GM12878 (cell line): ENCODE measurements at regions of chr9 and their contacts with region 1.

Region 1: GRCh38 chr9:32142074-32142473 is 242.4 kb upstream of the ACO1 start:
- DNase-seq: no peak
- ATAC-seq: no peak
- H3K4me3 ChIP-seq: no peak overlapping the region
- H3K27ac ChIP-seq: no peak overlapping the region
- H3K4me1 ChIP-seq: no peaks in the 10 kb centered on the region
- H3K27me3 ChIP-seq: no peaks in the 10 kb centered on the region
- CTCF ChIP-seq: no peak
- EP300 ChIP-seq: no peak
- POLR2A ChIP-seq: no peak
- RAD21 ChIP-seq: no peak

Region 2: GRCh38 chr9:32011049-32011448 is 131.0 kb before region 1 on chr9:
- CTCF ChIA-PET with region 1: no interaction called
- POLR2A ChIA-PET with region 1: no interaction called
- RAD21 ChIA-PET with region 1: no interaction called
- SMC1A ChIA-PET with region 1: no interaction called
- in situ Hi-C with region 1: no loop called
- intact Hi-C with region 1: no loop called
- DNase-seq: no peak
- ATAC-seq: peak; percentile 44
- H3K4me3 ChIP-seq: no peak overlapping the region
- H3K27ac ChIP-seq: no peak overlapping the region
- H3K4me1 ChIP-seq: no peaks in the 10 kb centered on the region
- H3K27me3 ChIP-seq: no peaks in the 10 kb centered on the region
- CTCF ChIP-seq: no peak
- EP300 ChIP-seq: no peak
- POLR2A ChIP-seq: no peak
- RAD21 ChIP-seq: no peak

Region 3: DNA sequence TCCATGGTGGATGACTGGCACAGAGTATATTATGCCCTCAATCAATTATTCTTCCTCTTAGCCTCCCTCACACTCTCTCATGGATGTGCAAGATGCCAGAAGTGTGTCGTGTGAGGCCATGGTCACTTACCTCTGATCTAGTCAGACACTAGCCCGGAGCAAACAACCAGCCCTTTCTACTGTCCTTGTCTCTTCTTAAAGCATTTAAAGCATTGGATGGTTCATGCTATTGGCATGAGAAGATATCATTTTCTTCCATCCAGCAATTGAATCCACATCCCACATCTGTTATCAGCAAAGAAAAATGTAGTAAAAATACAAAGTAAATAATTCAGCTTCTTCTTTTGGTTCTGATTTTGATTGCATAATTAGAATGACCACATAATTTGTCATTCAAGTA is 24.8 kb before region 1 on chr9:
- CTCF ChIA-PET with region 1: no interaction called
- POLR2A ChIA-PET with region 1: no interaction called
- RAD21 ChIA-PET with region 1: no interaction called
- SMC1A ChIA-PET with region 1: no interaction called
- in situ Hi-C with region 1: no loop called
- intact Hi-C with region 1: no loop called
- DNase-seq: no peak
- ATAC-seq: no peak
- H3K4me3 ChIP-seq: no peak overlapping the region
- H3K27ac ChIP-seq: no peak overlapping the region
- H3K4me1 ChIP-seq: no peaks in the 10 kb centered on the region
- H3K27me3 ChIP-seq: no peaks in the 10 kb centered on the region
- CTCF ChIP-seq: no peak
- EP300 ChIP-seq: no peak
- POLR2A ChIP-seq: no peak
- RAD21 ChIP-seq: no peak

Region 4: GRCh38 chr9:32344551-32345182 is 202.6 kb after region 1 on chr9:
- CTCF ChIA-PET with region 1: no interaction called
- POLR2A ChIA-PET with region 1: no interaction called
- RAD21 ChIA-PET with region 1: no interaction called
- SMC1A ChIA-PET with region 1: no interaction called
- in situ Hi-C with region 1: no loop called
- intact Hi-C with region 1: loop called (anchors 10 kb)
- DNase-seq: no peak
- ATAC-seq: peak; percentile 63
- H3K4me3 ChIP-seq: no peak overlapping the region
- H3K27ac ChIP-seq: no peak overlapping the region
- H3K4me1 ChIP-seq: no peaks in the 10 kb centered on the region
- H3K27me3 ChIP-seq: no peaks in the 10 kb centered on the region
- CTCF ChIP-seq: no peak
- EP300 ChIP-seq: no peak
- POLR2A ChIP-seq: no peak
- RAD21 ChIP-seq: no peak